ENCODE measurements at regions of chr22 and their contacts with region 1.

Region 1: DNA sequence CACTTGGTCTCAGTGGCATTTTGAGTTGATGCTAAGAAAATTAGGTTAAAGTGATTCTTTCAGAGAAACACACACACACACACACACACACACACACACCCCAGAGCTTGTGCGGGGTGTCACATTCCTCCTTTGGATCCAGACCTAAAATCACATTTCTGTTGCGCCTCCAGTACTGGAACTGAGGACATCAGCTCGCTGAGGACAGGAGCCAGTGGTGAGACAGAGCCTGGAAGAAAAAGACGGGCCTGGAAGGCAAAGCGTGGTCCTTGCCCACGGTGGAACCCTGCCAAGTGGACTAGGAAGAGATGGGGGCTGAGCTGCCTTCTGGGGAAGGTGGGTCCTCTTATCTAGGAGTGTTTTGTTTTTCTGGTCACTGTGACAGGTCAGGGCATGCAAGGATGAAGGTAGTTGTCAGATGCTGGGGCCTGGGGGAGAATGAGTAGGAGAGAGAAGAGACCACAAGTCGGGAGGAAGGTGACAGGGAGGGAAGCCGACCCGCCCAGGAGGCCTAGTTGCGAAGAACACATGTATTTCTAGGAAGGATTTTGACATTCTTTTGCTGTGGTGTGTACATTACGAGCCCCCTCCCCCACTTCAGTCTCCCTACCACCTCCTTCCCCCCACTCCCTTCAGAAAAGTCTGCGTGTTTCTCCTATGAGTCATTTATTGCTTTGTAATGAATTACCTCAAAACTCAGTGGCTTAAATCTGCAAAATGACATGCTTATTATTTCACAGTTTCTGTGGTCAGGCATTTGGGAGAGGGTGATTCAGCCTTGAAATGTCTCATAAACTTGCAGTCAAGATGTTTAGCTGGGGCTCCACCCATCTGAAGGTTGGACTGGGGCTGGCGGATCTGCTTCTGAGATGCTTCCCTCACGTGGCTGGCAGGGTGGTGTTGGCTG is 4.8 kb upstream of the ELFN2 start:
- DNase-seq: no peak
- H3K4me3 ChIP-seq: no peak overlapping the region
- H3K27ac ChIP-seq: no peak overlapping the region
- H3K4me1 ChIP-seq: peaks cover 0 to 7% (median 4%) of the 10 kb centered on the region in 4 donors
- H3K27me3 ChIP-seq: peaks cover 84% of the 10 kb centered on the region
- CTCF ChIP-seq: no peak
- EP300 ChIP-seq: no peak
- POLR2A ChIP-seq: no peak

Region 2: GRCh38 chr22:36925388-36926290 is 506.4 kb before region 1 on chr22:
- in situ Hi-C with region 1: no loop called
- intact Hi-C with region 1: no loop called
- DNase-seq: no peak
- H3K4me3 ChIP-seq: no peak overlapping the region
- H3K27ac ChIP-seq: no peak overlapping the region
- H3K4me1 ChIP-seq: peaks cover 0 to 8% (median 3%) of the 10 kb centered on the region in 4 donors
- H3K27me3 ChIP-seq: peaks cover 5% of the 10 kb centered on the region
- CTCF ChIP-seq: no peak
- EP300 ChIP-seq: no peak
- POLR2A ChIP-seq: no peak

Region 3: GRCh38 chr22:37316875-37317371 is 115.1 kb before region 1 on chr22:
- in situ Hi-C with region 1: loop called in 2 of 4 experiments (anchors 10 kb)
- intact Hi-C with region 1: no loop called
- DNase-seq: peak; percentile 76
- H3K4me3 ChIP-seq: no peak overlapping the region
- H3K27ac ChIP-seq: no peak overlapping the region
- H3K4me1 ChIP-seq: no peaks in the 10 kb centered on the region
- H3K27me3 ChIP-seq: no peaks in the 10 kb centered on the region
- CTCF ChIP-seq: peak; percentile 76 to 94 (median 91)
- EP300 ChIP-seq: no peak
- POLR2A ChIP-seq: no peak

Region 4: GRCh38 chr22:37328017-37328416 is 104.0 kb before region 1 on chr22:
- in situ Hi-C with region 1: loop called in 1 of 4 experiments (anchors 10 kb)
- intact Hi-C with region 1: no loop called
- DNase-seq: no peak
- H3K4me3 ChIP-seq: no peak overlapping the region
- H3K27ac ChIP-seq: no peak overlapping the region
- H3K4me1 ChIP-seq: peaks cover 0 to 31% (median 12%) of the 10 kb centered on the region in 4 donors
- H3K27me3 ChIP-seq: peaks cover 84% of the 10 kb centered on the region
- CTCF ChIP-seq: no peak
- EP300 ChIP-seq: no peak
- POLR2A ChIP-seq: no peak

Region 5: DNA sequence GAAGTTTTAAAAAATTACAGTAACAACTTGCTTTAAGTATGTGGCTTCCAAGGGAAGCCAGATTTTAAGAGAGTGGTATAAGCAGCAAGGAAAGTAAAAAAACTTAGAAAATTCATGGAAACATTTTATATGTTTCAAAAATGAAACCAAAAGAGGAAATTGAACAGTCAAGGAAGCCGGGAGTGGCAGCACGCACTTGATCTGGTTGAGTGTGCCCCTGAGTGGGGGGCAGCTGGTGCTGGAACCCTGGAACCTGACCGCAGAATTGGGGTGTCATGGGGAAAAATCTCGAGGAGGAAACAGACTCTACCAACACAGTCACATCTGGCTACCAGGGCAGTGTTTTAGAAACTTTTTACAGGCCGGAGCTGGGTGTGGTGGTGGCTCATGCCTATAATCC is 488.1 kb after region 1 on chr22:
- in situ Hi-C with region 1: no loop called
- intact Hi-C with region 1: no loop called
- DNase-seq: no peak
- H3K4me3 ChIP-seq: no peak overlapping the region
- H3K27ac ChIP-seq: peak overlapping the region; percentile 6 to 42 (median 32)
- H3K4me1 ChIP-seq: no peaks in the 10 kb centered on the region
- H3K27me3 ChIP-seq: no peaks in the 10 kb centered on the region
- CTCF ChIP-seq: no peak
- EP300 ChIP-seq: no peak
- POLR2A ChIP-seq: no peak